SK-N-SH (cell line): ENCODE measurements at regions of chr18 and their contacts with region 1.

Region 1: GRCh38 chr18:74342416-74343043 is 26.9 kb downstream of the C18orf63 start:
- DNase-seq: peak; percentile 31
- H3K4me3 ChIP-seq: no peak overlapping the region; a peak in 1 of 4 replicates
- H3K27ac ChIP-seq: no peak overlapping the region
- H3K4me1 ChIP-seq: no peaks in the 10 kb centered on the region
- H3K27me3 ChIP-seq: peaks cover 3% of the 10 kb centered on the region; the same call in 1 of the 2 replicates
- CTCF ChIP-seq: peak; percentile 74
- EP300 ChIP-seq: no peak
- RAD21 ChIP-seq: peak; percentile 90

Region 2: DNA sequence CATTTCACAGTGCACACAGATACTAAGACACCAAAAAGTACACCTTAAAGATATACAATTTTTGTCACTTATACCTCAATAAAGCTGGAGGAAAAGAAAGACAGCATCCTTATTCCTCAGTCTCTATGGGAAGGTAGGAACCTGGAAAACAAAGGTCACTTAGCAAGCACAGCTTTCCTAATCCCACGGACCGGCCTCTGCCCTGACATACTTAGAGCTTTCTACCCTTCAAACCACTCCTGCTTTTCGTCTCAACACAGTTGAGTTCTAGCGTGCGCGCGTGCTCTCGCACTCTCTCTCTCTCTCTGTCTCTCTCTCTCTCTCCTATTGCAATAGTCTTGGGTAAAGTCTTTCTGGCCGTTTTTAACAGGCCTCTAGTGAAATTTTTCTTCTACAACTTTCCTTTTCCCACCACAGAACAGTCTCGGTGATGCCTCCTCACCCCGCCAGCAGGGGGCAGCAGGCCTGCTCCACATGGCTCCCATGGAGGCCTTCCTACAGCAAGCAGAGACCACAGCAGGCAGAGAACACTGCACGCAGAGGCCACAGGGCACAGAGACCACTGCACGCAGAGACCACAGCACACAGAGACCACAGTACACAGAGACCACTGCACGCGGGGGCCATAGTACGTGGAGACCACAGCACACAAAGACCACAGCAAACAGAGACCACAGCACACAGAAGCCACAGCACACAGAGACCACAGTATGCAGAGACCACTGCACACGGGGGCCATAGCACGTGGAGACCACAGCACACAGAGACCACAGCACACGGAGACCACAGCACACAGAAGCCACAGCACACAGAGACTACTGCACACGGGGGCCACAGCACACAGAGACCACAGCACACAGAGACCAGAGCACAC is 301.8 kb before region 1 on chr18:
- CTCF ChIA-PET with region 1: interaction called, 23 read pairs
- POLR2A ChIA-PET with region 1: no interaction called
- DNase-seq: peak; percentile 50
- H3K4me3 ChIP-seq: no peak overlapping the region; a peak in 1 of 4 replicates
- H3K27ac ChIP-seq: no peak overlapping the region
- H3K4me1 ChIP-seq: no peaks in the 10 kb centered on the region
- H3K27me3 ChIP-seq: no peaks in the 10 kb centered on the region; the same call in 1 of the 2 replicates
- CTCF ChIP-seq: peak; percentile 64
- EP300 ChIP-seq: no peak
- RAD21 ChIP-seq: peak; percentile 46

Region 3: GRCh38 chr18:74171910-74172606 is 170.5 kb before region 1 on chr18:
- CTCF ChIA-PET with region 1: interaction called, 11 read pairs
- POLR2A ChIA-PET with region 1: no interaction called
- DNase-seq: no peak
- H3K4me3 ChIP-seq: peak overlapping the region; percentile 33 to 49
- H3K27ac ChIP-seq: no peak overlapping the region
- H3K4me1 ChIP-seq: peaks cover 0 to 5% of the 10 kb centered on the region in 2 experiments; a peak in 1 of 4 replicates
- H3K27me3 ChIP-seq: peaks cover 88% of the 10 kb centered on the region
- CTCF ChIP-seq: no peak
- EP300 ChIP-seq: no peak
- RAD21 ChIP-seq: no peak

Region 4: DNA sequence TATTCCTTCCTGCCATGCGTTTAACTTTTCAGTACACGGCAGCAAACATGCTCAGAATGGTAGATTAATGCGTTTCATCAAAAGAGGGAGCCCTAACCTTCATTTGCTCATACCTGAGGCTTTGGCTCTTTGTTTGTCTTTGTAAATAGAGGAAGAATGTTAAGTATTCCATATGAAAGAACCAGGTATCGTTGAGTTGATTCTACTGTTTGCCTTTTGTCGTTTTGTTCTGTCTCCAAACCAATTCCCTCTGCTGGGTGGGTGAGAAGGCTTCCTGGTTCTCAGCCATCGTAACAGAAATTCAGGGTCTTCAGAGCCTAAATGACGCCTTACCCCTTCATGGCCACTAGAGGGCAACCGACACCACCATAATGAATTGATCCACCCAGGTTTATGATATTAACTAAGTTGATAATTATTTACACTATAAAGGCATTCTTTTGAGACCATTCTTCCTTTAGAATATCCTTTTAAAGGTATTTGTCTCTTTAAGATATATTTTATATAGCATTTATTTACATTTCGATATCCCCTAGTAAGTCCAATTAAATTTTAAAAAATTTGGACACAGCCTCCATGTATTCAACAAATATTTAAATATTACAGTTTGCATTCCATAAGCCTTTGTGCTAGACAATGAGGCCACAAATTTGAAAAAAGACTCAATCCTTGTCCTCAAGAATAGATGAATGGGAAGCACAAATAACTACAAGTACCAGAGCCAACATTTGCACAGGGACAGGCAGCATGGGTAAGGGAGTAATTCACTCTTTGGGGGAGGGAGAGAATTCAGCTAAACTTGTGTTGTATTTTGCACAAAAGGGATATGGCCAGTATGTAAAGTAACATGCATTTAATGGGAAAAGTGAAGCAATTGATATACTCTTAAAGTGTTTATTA is 146.1 kb before region 1 on chr18:
- CTCF ChIA-PET with region 1: interaction called, 91 read pairs
- POLR2A ChIA-PET with region 1: no interaction called
- DNase-seq: peak; percentile 87
- H3K4me3 ChIP-seq: peak overlapping the region; percentile 34 to 48; a peak in 2 of 4 replicates
- H3K27ac ChIP-seq: no peak overlapping the region
- H3K4me1 ChIP-seq: peaks cover 0 to 11% of the 10 kb centered on the region in 2 experiments; a peak in 1 of 4 replicates
- H3K27me3 ChIP-seq: peaks cover 46% of the 10 kb centered on the region
- CTCF ChIP-seq: peak; percentile 95
- EP300 ChIP-seq: no peak
- RAD21 ChIP-seq: peak; percentile 87

Region 5: GRCh38 chr18:74242438-74243096 is 100.0 kb before region 1 on chr18:
- CTCF ChIA-PET with region 1: interaction called, 29 read pairs
- POLR2A ChIA-PET with region 1: no interaction called
- DNase-seq: no peak
- H3K4me3 ChIP-seq: no peak overlapping the region
- H3K27ac ChIP-seq: no peak overlapping the region
- H3K4me1 ChIP-seq: peaks cover 0 to 7% of the 10 kb centered on the region in 2 experiments; a peak in 1 of 4 replicates
- H3K27me3 ChIP-seq: no peaks in the 10 kb centered on the region; the same call in 1 of the 2 replicates
- CTCF ChIP-seq: no peak
- EP300 ChIP-seq: no peak
- RAD21 ChIP-seq: peak; percentile 53

Region 6: GRCh38 chr18:74299746-74300145 is 42.8 kb before region 1 on chr18:
- CTCF ChIA-PET with region 1: interaction called, 11 read pairs
- POLR2A ChIA-PET with region 1: no interaction called
- DNase-seq: no peak
- H3K4me3 ChIP-seq: no peak overlapping the region
- H3K27ac ChIP-seq: no peak overlapping the region
- H3K4me1 ChIP-seq: no peaks in the 10 kb centered on the region; a peak in 1 of 4 replicates
- H3K27me3 ChIP-seq: no peaks in the 10 kb centered on the region
- CTCF ChIP-seq: no peak
- EP300 ChIP-seq: no peak
- RAD21 ChIP-seq: no peak

Region 7: GRCh38 chr18:74353169-74353775 is 10.7 kb after region 1 on chr18:
- CTCF ChIA-PET with region 1: interaction called, 29 read pairs
- POLR2A ChIA-PET with region 1: no interaction called
- DNase-seq: peak; percentile 35
- H3K4me3 ChIP-seq: no peak overlapping the region
- H3K27ac ChIP-seq: no peak overlapping the region
- H3K4me1 ChIP-seq: no peaks in the 10 kb centered on the region
- H3K27me3 ChIP-seq: peaks cover 11% of the 10 kb centered on the region
- CTCF ChIP-seq: peak; percentile 62
- EP300 ChIP-seq: no peak
- RAD21 ChIP-seq: peak; percentile 75